Mammary epithelial cell (primary cell): ENCODE measurements at regions of chr4 and their contacts with region 1.

Region 1: DNA sequence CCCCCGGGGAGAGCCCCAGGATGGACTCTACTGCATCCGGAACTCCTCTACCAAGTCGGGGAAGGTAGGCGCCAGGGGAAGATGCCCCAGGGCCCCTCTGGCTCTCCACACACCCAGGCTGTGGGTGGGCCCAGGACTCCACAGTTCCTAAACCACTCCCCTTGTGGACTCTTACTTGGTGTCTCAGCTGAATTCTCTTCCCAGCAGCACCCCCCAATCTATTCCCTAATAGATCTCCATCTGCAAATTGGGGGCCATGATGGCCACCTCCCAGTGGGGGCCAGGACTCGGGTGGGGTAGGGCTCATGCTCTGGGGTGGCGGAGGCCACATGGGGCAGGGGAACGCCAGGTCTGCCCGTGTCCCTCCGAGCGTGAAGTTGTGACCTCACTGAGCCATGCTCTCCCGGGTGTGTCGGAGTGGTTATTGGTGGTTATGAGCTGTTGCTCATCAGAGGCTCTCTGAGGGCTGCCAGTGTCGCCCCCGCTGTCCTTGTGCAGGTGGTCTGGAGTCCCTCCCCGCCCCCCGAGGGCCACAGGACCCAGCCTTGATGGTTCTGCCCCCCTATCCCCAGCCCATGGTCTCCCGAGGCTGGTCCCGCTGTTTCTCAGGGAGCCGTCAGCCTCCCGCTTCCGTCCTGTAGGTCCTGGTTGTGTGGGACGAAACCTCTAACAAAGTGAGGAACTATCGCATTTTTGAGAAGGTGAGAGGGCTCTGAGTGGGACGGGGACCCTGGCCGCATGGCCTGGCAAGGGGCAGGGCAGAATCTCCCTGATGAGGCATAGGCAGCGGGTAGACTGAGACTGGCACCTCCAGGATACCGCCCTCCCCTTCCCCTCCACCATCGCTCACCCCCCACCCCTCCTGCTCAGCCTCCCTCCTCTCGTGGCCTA is 11.1 kb upstream of the ADD1 start:
- DNase-seq: no peak
- H3K4me3 ChIP-seq: no peak overlapping the region
- H3K27ac ChIP-seq: no peak overlapping the region
- H3K4me1 ChIP-seq: no peaks in the 10 kb centered on the region
- H3K27me3 ChIP-seq: no peaks in the 10 kb centered on the region
- CTCF ChIP-seq: no peak

Region 2: GRCh38 chr4:2761035-2761923 is 71.3 kb before region 1 on chr4:
- CTCF ChIA-PET with region 1: no interaction called
- dilution Hi-C with region 1: loop called (anchors 5 kb)
- in situ Hi-C with region 1: no loop called
- intact Hi-C with region 1: no loop called
- DNase-seq: no peak
- H3K4me3 ChIP-seq: no peak overlapping the region
- H3K27ac ChIP-seq: no peak overlapping the region
- H3K4me1 ChIP-seq: peaks cover 15% of the 10 kb centered on the region
- H3K27me3 ChIP-seq: no peaks in the 10 kb centered on the region
- CTCF ChIP-seq: no peak